Astrocyte of the cerebellum (primary cell): ENCODE measurements at regions of chr4 and their contacts with region 1.

Region 1: GRCh38 chr4:53908661-53909078 is 155.7 kb downstream of the CHIC2 start:
- DNase-seq: peak; percentile 85
- H3K4me3 ChIP-seq: peak overlapping the region; percentile 10
- CTCF ChIP-seq: peak; percentile 82

Region 2: GRCh38 chr4:53015681-53016080 is 893.0 kb before region 1 on chr4:
- in situ Hi-C with region 1: loop called (anchors 25 kb)
- DNase-seq: peak; percentile 57
- H3K4me3 ChIP-seq: no peak overlapping the region
- CTCF ChIP-seq: peak; percentile 72

Region 3: DNA sequence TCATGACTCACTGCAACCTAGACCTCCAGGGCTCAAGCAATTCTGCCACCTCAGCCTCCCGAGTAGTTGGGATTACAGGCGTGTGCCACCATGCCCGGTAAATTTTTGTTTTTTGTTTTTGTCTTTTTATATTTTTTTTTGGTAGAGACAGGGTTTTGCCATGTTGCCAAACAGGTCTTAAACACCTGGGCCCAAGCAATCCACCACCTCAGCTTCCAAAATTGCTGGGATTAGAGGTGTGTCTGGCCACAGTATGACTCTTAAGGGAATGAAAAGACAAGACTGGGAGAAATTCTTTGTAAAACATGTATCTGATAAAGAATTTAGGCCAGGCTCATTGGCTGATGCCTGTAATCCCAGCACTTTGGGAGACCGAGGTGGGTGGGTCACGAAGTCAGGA is 291.2 kb after region 1 on chr4:
- in situ Hi-C with region 1: loop called (anchors 5 kb)
- DNase-seq: no peak
- H3K4me3 ChIP-seq: no peak overlapping the region
- CTCF ChIP-seq: no peak